ENCODE measurements at regions of chr13 and their contacts with region 1.

Region 1: GRCh38 chr13:91358387-91358782 is 10.9 kb downstream of the MIR17HG start:
- DNase-seq: peak in 2 of 4 experiments; percentile 61 to 73
- ATAC-seq: peak; percentile 40
- H3K4me3 ChIP-seq: no peak overlapping the region
- H3K27ac ChIP-seq: peak overlapping the region; percentile 1; the same call in 2 of the 3 replicates
- H3K4me1 ChIP-seq: peaks cover 0 to 7% of the 10 kb centered on the region in 2 experiments; a peak in 3 of 5 replicates
- H3K27me3 ChIP-seq: no peaks in the 10 kb centered on the region
- CTCF ChIP-seq: no peak
- EP300 ChIP-seq: no peak
- POLR2A ChIP-seq: no peak
- RAD21 ChIP-seq: no peak

Region 2: GRCh38 chr13:91145571-91146205 is 212.7 kb before region 1 on chr13:
- CTCF ChIA-PET with region 1: no interaction called
- POLR2A ChIA-PET with region 1: no interaction called
- in situ Hi-C with region 1: no loop called
- intact Hi-C with region 1: no loop called
- DNase-seq: no peak
- ATAC-seq: no peak
- H3K4me3 ChIP-seq: no peak overlapping the region
- H3K27ac ChIP-seq: no peak overlapping the region
- H3K4me1 ChIP-seq: no peaks in the 10 kb centered on the region
- H3K27me3 ChIP-seq: no peaks in the 10 kb centered on the region
- CTCF ChIP-seq: no peak
- EP300 ChIP-seq: no peak
- POLR2A ChIP-seq: no peak
- RAD21 ChIP-seq: no peak

Region 3: DNA sequence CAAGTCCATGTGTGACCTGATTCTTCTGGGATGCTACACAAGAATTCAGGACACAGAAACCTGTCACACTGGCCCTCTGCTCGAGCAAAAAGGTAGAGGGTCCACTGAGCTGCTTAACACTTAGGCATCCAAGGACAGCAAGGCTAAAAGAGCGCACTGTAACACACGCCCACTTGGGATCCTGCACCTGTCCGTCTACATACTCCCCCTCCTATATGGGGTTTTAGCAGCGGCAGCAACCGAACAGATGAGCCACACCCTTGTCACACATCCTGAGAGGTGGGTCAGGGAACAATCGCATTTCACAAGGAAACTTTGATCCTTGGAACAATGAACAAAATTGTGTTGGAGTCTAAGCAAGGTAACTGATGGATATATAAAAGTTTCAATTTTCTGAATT is 62.4 kb before region 1 on chr13:
- CTCF ChIA-PET with region 1: no interaction called
- POLR2A ChIA-PET with region 1: no interaction called
- in situ Hi-C with region 1: no loop called
- intact Hi-C with region 1: no loop called
- DNase-seq: no peak
- ATAC-seq: peak; percentile 57
- H3K4me3 ChIP-seq: no peak overlapping the region
- H3K27ac ChIP-seq: no peak overlapping the region
- H3K4me1 ChIP-seq: no peaks in the 10 kb centered on the region
- H3K27me3 ChIP-seq: peaks cover 0 to 8% of the 10 kb centered on the region in 2 experiments; a peak in 2 of 5 replicates
- CTCF ChIP-seq: no peak
- EP300 ChIP-seq: no peak
- POLR2A ChIP-seq: no peak
- RAD21 ChIP-seq: no peak

Region 4: DNA sequence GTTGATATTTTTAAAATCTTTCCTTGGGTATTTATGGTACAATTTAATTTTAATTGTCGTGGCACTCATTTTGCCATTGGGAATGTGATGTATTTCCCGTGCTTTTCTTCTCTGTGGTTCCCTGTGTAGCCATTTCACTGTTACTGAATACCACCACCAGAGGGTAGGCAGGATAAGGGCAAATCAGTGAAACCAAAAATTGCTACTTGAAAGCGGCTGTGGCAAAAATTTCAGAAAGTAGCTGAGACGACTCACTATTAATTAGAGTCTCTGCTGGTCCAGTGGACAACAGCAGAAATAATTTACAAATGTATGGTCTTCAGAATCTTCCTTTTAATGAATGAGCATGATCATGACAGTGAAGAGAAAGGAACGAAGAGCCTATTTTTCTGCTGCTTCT is 45.3 kb before region 1 on chr13:
- CTCF ChIA-PET with region 1: no interaction called
- POLR2A ChIA-PET with region 1: interaction called, 11 read pairs
- in situ Hi-C with region 1: no loop called
- intact Hi-C with region 1: no loop called
- DNase-seq: peak in 2 of 4 experiments; percentile 45 to 65
- ATAC-seq: peak; percentile 84
- H3K4me3 ChIP-seq: no peak overlapping the region
- H3K27ac ChIP-seq: no peak overlapping the region
- H3K4me1 ChIP-seq: no peaks in the 10 kb centered on the region
- H3K27me3 ChIP-seq: no peaks in the 10 kb centered on the region
- CTCF ChIP-seq: no peak
- EP300 ChIP-seq: no peak
- POLR2A ChIP-seq: no peak
- RAD21 ChIP-seq: peak in 1 of 2 experiments; percentile 88; a peak in 2 of 4 replicates

Region 5: GRCh38 chr13:91323349-91323748 is 35.0 kb before region 1 on chr13:
- CTCF ChIA-PET with region 1: no interaction called
- POLR2A ChIA-PET with region 1: interaction called, 16 read pairs
- in situ Hi-C with region 1: no loop called
- intact Hi-C with region 1: no loop called
- DNase-seq: no peak
- ATAC-seq: no peak
- H3K4me3 ChIP-seq: no peak overlapping the region
- H3K27ac ChIP-seq: no peak overlapping the region
- H3K4me1 ChIP-seq: no peaks in the 10 kb centered on the region
- H3K27me3 ChIP-seq: no peaks in the 10 kb centered on the region
- CTCF ChIP-seq: no peak
- EP300 ChIP-seq: no peak
- POLR2A ChIP-seq: no peak
- RAD21 ChIP-seq: no peak

Region 6: DNA sequence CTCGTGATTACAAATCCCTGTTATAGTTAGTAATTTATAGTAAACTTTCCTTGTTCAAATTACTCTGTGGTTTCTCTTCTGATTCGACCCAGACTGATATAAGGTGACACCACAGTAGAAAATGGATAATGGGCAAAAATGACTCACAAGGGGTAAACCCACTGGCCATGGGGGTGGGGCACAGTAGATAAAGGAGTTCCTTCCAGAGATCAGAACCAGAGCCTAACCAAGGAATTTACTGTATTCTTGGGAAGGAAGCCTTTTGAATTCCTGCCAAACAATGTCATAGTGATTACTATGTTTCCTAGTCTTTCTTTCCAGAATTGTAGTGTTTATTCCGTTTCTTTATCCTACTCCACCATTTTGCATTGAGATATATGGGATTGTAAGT is 11.1 kb after region 1 on chr13:
- CTCF ChIA-PET with region 1: no interaction called
- POLR2A ChIA-PET with region 1: interaction called, 99 read pairs
- in situ Hi-C with region 1: no loop called
- intact Hi-C with region 1: loop called (anchors 1 kb)
- DNase-seq: peak in 2 of 4 experiments; percentile 60 to 67
- ATAC-seq: peak; percentile 12; the same call in 2 of the 3 replicates
- H3K4me3 ChIP-seq: no peak overlapping the region
- H3K27ac ChIP-seq: no peak overlapping the region
- H3K4me1 ChIP-seq: peaks cover 0 to 9% of the 10 kb centered on the region in 2 experiments; a peak in 3 of 5 replicates
- H3K27me3 ChIP-seq: no peaks in the 10 kb centered on the region
- CTCF ChIP-seq: no peak
- EP300 ChIP-seq: no peak
- POLR2A ChIP-seq: no peak
- RAD21 ChIP-seq: no peak

Region 7: GRCh38 chr13:91375116-91375729 is 16.8 kb after region 1 on chr13:
- CTCF ChIA-PET with region 1: interaction called, 3 read pairs
- POLR2A ChIA-PET with region 1: interaction called, 99 read pairs
- in situ Hi-C with region 1: no loop called
- intact Hi-C with region 1: loop called (anchors 1 kb)
- DNase-seq: peak; percentile 69 to 83 (median 78)
- ATAC-seq: peak; percentile 94
- H3K4me3 ChIP-seq: no peak overlapping the region
- H3K27ac ChIP-seq: no peak overlapping the region
- H3K4me1 ChIP-seq: no peaks in the 10 kb centered on the region
- H3K27me3 ChIP-seq: no peaks in the 10 kb centered on the region; a peak in 1 of 5 replicates
- CTCF ChIP-seq: peak in 1 of 3 experiments; percentile 93; a peak in 2 of 6 replicates
- EP300 ChIP-seq: no peak
- POLR2A ChIP-seq: no peak
- RAD21 ChIP-seq: no peak

Region 8: GRCh38 chr13:91381371-91381770 is 23.0 kb after region 1 on chr13:
- CTCF ChIA-PET with region 1: interaction called, 3 read pairs
- POLR2A ChIA-PET with region 1: interaction called, 31 read pairs
- in situ Hi-C with region 1: no loop called
- intact Hi-C with region 1: loop called (anchors 2 kb)
- DNase-seq: peak in 1 of 4 experiments; percentile 60
- ATAC-seq: peak; percentile 55; the same call in 2 of the 3 replicates
- H3K4me3 ChIP-seq: no peak overlapping the region
- H3K27ac ChIP-seq: no peak overlapping the region
- H3K4me1 ChIP-seq: no peaks in the 10 kb centered on the region
- H3K27me3 ChIP-seq: no peaks in the 10 kb centered on the region
- CTCF ChIP-seq: peak in 1 of 3 experiments; percentile 81; a peak in 2 of 6 replicates
- EP300 ChIP-seq: no peak
- POLR2A ChIP-seq: no peak
- RAD21 ChIP-seq: no peak

Region 9: GRCh38 chr13:91389186-91389585 is 30.8 kb after region 1 on chr13:
- CTCF ChIA-PET with region 1: no interaction called
- POLR2A ChIA-PET with region 1: interaction called, 31 read pairs
- in situ Hi-C with region 1: no loop called
- intact Hi-C with region 1: no loop called
- DNase-seq: no peak
- ATAC-seq: no peak
- H3K4me3 ChIP-seq: no peak overlapping the region
- H3K27ac ChIP-seq: no peak overlapping the region
- H3K4me1 ChIP-seq: no peaks in the 10 kb centered on the region
- H3K27me3 ChIP-seq: no peaks in the 10 kb centered on the region
- CTCF ChIP-seq: no peak
- EP300 ChIP-seq: no peak
- POLR2A ChIP-seq: no peak
- RAD21 ChIP-seq: no peak

Measured in K562 (cell line).